Lower lobe of right lung (tissue), 2 donors: ENCODE measurements at regions of chr1 and their contacts with region 1.

Region 1: GRCh38 chr1:205919026-205919746 is 24.1 kb downstream of the SLC26A9 start:
- DNase-seq: peak; percentile 73
- ATAC-seq: peak; percentile 79
- H3K4me3 ChIP-seq: no peak overlapping the region
- H3K27ac ChIP-seq: peak overlapping the region; percentile 62
- H3K4me1 ChIP-seq: peaks cover 23% of the 10 kb centered on the region
- H3K27me3 ChIP-seq: no peaks in the 10 kb centered on the region
- CTCF ChIP-seq: peak; percentile 94

Region 2: DNA sequence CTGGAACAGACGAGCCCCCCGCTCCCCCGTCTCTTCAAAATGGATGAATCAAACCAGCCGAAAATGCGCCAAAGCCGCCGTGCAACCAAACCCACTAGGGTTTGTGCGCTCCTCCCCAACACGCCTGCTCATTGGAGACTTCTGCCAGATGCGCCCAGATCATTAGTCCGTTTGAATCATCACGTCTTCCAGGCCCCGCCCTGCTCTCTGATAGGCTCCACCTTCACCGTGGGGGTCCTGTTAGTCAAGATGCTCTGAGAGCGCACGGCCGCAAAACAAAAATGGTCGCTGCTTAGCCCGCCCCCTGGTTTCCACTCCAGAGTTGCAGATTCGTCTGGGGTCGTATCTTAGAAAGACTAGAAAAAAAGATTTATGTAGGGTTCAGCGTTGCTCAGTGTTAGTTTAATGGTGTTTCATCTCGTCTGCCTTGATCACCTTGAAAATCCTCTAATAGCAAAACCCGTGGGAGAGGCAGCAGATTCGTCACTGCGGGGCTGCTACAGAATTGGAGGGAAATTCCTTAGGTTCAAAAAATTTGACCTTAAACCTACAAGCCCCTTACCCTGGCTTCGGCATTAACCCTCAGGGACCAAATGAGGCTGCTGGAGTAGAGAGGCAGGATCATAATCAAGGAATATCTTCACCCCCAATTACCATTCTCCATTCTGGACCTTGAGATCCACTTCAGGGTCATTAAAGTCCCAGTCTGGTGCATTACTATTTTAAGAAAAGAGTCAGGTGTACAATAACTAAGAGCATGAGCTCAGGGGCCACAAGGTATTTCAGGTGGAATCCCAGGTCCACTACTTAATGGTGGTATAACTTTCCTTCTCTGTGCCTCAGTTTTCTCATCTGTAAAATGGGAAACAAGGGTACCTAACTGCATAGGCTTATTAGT is 168.8 kb before region 1 on chr1 and contains the start of gene NUCKS1:
- intact Hi-C with region 1: no loop called
- DNase-seq: peak; percentile 98
- ATAC-seq: peak; percentile 93 to 95
- H3K4me3 ChIP-seq: peak within 1 kb of the TSS; percentile 80
- H3K27ac ChIP-seq: peak within 1 kb of the TSS; percentile 94
- H3K4me1 ChIP-seq: peaks cover 27% of the 10 kb centered on the region
- H3K27me3 ChIP-seq: no peaks in the 10 kb centered on the region
- CTCF ChIP-seq: no peak
- total RNA-seq, gene NUCKS1: 111 TPM

Region 3: DNA sequence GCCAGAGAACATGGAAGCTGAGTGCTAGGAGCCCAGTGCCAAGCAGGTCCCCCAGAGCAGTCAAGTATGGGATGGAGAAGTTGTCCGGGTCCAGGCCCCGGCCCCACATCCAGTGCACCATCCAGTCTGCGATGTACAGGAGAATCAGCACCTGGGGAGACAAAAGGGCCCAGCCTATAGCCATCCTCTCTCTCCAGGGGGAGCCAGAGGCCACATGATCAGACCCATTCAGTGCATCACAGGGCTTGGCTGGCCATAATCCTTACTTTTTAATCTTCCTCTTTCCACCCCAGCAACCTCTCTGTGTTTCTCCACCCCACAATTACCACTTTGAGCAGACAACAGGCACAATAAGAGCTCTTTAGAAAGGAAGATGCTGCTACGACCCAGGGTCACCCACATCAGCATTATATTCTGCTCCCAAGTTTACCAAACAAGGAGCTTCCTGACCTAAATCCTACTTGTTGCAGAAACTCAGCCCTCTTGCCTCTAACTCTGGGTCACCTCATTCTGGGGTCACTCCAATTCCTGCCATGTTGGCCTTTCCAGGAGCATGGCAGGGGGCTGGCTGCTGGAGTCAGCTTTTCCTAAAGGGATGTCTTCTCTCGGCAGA is 127.5 kb before region 1 on chr1:
- intact Hi-C with region 1: loop called (anchors 10 kb)
- DNase-seq: peak; percentile 65
- ATAC-seq: peak; percentile 86 to 92
- H3K4me3 ChIP-seq: no peak overlapping the region
- H3K27ac ChIP-seq: no peak overlapping the region
- H3K4me1 ChIP-seq: no peaks in the 10 kb centered on the region
- H3K27me3 ChIP-seq: no peaks in the 10 kb centered on the region
- CTCF ChIP-seq: peak; percentile 80

Region 4: DNA sequence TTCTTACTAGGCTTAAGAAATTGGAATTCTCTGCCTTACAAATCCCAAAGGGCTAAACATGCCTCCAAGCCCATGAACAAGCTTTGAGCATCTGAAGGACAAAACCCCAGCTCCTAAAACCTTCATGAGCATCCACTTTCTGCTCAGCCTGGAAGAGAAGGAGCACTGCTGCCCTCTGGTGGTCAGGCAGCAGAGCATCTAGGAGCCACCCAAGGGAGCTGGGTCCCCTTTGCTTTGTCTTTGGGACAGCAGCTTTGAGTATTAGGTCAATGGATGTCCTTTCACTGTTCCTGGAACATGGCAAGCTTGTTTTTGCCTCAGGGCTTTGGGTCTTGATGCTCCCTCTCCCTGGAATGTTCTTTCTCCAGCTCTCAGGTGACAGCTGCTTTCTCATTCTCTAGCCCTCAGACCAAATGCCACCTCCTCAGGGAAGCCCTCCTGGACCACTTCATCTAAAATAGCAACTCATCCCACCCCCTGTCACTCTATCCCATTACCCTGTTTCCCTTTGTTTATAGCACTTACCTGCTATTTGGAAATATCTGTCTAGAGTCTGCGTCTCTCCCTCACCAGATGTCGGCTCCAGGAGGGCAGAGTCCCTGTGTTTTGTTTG is 58.3 kb after region 1 on chr1:
- intact Hi-C with region 1: loop called (anchors 5 kb)
- DNase-seq: peak; percentile 70
- ATAC-seq: peak; percentile 82 to 88
- H3K4me3 ChIP-seq: no peak overlapping the region
- H3K27ac ChIP-seq: no peak overlapping the region
- H3K4me1 ChIP-seq: peaks cover 6% of the 10 kb centered on the region
- H3K27me3 ChIP-seq: no peaks in the 10 kb centered on the region
- CTCF ChIP-seq: peak; percentile 97